ENCODE measurements at regions of chr17 and their contacts with region 1.

Region 1: DNA sequence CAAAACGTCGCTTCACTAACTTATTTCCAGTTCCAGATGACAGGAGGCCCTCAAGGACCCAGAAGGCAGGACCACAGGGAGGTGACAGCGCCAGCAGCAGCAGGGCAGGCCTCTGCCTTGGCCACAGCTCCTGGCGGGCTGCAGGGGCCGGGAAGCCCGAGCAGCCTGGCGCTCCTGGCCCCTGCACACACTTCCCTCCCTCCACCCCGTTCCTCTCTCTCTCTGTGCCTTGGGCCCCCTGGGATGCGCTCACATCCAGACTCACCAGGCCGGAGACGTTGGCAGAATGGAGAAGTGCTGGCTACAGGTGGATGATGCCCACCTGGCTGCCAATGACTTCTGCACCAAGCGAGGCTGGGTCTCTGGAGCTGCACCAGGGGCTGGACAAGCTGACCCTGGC is 12.7 kb downstream of the ZNF594 start:
- DNase-seq: no peak
- H3K4me3 ChIP-seq: no peak overlapping the region
- H3K27ac ChIP-seq: no peak overlapping the region
- H3K4me1 ChIP-seq: no peaks in the 10 kb centered on the region
- H3K27me3 ChIP-seq: no peaks in the 10 kb centered on the region
- CTCF ChIP-seq: no peak
- POLR2A ChIP-seq: no peak

Region 2: DNA sequence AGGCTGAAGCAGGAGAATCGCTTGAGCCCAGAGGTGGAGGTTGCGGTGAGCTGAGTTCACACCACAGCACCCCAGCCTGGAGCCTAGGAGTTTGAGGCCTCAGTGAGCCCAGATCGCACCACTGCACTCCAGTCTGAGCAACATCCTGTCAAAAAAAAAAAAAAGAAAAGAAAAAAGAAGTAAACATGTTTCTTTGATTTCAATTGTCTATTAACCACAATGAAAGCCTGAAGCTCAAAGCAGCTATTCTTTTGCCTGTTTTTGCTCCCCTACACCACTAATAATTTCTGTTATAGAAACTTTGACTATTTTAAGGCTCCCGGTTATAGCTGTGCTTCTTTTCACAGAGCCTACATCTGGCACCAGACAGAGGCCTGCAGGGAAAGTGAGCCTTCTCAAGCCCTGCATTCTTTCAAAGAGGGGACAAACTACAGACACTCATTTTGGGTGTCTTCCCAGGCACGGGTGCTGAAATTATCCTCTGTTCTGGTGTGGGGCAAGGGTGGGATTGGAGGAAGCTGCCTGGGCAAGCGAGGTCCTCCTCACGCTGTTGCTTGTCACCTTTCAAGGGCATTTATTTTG is 129.6 kb before region 1 on chr17:
- intact Hi-C with region 1: no loop called
- DNase-seq: peak in 1 of 2 donors; percentile 10
- H3K4me3 ChIP-seq: no peak overlapping the region
- H3K27ac ChIP-seq: no peak overlapping the region
- H3K4me1 ChIP-seq: no peaks in the 10 kb centered on the region
- H3K27me3 ChIP-seq: no peaks in the 10 kb centered on the region
- CTCF ChIP-seq: no peak
- POLR2A ChIP-seq: no peak

Region 3: GRCh38 chr17:5080591-5080990 is 98.4 kb before region 1 on chr17:
- intact Hi-C with region 1: loop called (anchors 5 kb)
- DNase-seq: no peak
- H3K4me3 ChIP-seq: no peak overlapping the region
- H3K27ac ChIP-seq: no peak overlapping the region
- H3K4me1 ChIP-seq: peaks cover 4 to 15% of the 10 kb centered on the region in 2 donors
- H3K27me3 ChIP-seq: no peaks in the 10 kb centered on the region
- CTCF ChIP-seq: no peak
- POLR2A ChIP-seq: no peak

Region 4: GRCh38 chr17:5254903-5255526 is 76.0 kb after region 1 on chr17:
- intact Hi-C with region 1: no loop called
- DNase-seq: no peak
- H3K4me3 ChIP-seq: no peak overlapping the region
- H3K27ac ChIP-seq: no peak overlapping the region
- H3K4me1 ChIP-seq: no peaks in the 10 kb centered on the region
- H3K27me3 ChIP-seq: no peaks in the 10 kb centered on the region
- CTCF ChIP-seq: no peak
- POLR2A ChIP-seq: no peak

Region 5: GRCh38 chr17:5272322-5272721 is 93.3 kb after region 1 on chr17:
- intact Hi-C with region 1: no loop called
- DNase-seq: no peak
- H3K4me3 ChIP-seq: no peak overlapping the region
- H3K27ac ChIP-seq: no peak overlapping the region
- H3K4me1 ChIP-seq: no peaks in the 10 kb centered on the region
- H3K27me3 ChIP-seq: no peaks in the 10 kb centered on the region
- CTCF ChIP-seq: no peak
- POLR2A ChIP-seq: no peak

Measured in thyroid gland (tissue), 4 donors.